HCT116 (cell line): ENCODE measurements at regions of chr6 and their contacts with region 1.

Region 1: GRCh38 chr6:74091136-74091793 is 395.3 kb downstream of the CD109 start:
- DNase-seq: peak; percentile 65
- ATAC-seq: peak; percentile 95
- H3K4me3 ChIP-seq: no peak overlapping the region
- H3K27ac ChIP-seq: no peak overlapping the region
- H3K4me1 ChIP-seq: no peaks in the 10 kb centered on the region
- H3K27me3 ChIP-seq: no peaks in the 10 kb centered on the region
- CTCF ChIP-seq: peak; percentile 58 to 85 (median 58); a peak in 5 of 6 replicates
- POLR2A ChIP-seq: no peak
- RAD21 ChIP-seq: peak; percentile 61

Region 2: GRCh38 chr6:74066168-74066871 is 24.9 kb before region 1 on chr6:
- CTCF ChIA-PET with region 1: no interaction called
- POLR2A ChIA-PET with region 1: no interaction called
- RAD21 ChIA-PET with region 1: no interaction called
- intact Hi-C with region 1: no loop called
- DNase-seq: no peak
- ATAC-seq: no peak
- H3K4me3 ChIP-seq: no peak overlapping the region
- H3K27ac ChIP-seq: no peak overlapping the region
- H3K4me1 ChIP-seq: no peaks in the 10 kb centered on the region
- H3K27me3 ChIP-seq: no peaks in the 10 kb centered on the region
- CTCF ChIP-seq: no peak
- POLR2A ChIP-seq: no peak
- RAD21 ChIP-seq: no peak

Region 3: DNA sequence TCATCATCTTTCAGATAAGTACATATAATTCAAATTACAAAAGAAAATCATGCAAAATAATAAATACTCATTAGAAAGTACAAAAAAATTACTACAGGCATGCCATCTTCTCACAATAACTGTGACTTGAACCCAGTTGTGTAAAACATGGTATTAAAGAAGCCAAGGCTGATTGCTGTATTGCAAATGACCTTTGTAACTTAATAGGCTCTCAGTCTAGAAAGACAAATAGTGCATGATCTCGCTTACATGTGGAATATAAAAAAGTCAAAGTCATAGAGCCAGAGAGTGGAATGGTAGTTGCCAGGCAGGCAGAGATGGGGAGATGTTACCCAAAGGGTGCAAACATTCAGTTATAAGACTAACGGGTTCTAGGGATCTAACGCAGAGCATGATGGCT is 488.5 kb after region 1 on chr6:
- CTCF ChIA-PET with region 1: interaction called, 3 read pairs
- POLR2A ChIA-PET with region 1: no interaction called
- RAD21 ChIA-PET with region 1: no interaction called
- intact Hi-C with region 1: loop called (anchors 5 kb)
- DNase-seq: no peak
- ATAC-seq: no peak
- H3K4me3 ChIP-seq: no peak overlapping the region
- H3K27ac ChIP-seq: no peak overlapping the region
- H3K4me1 ChIP-seq: no peaks in the 10 kb centered on the region
- H3K27me3 ChIP-seq: no peaks in the 10 kb centered on the region
- CTCF ChIP-seq: no peak
- POLR2A ChIP-seq: no peak
- RAD21 ChIP-seq: no peak